CD8-positive, alpha-beta T cell (primary cell): ENCODE measurements at regions of chr5 and their contacts with region 1.

Region 1: DNA sequence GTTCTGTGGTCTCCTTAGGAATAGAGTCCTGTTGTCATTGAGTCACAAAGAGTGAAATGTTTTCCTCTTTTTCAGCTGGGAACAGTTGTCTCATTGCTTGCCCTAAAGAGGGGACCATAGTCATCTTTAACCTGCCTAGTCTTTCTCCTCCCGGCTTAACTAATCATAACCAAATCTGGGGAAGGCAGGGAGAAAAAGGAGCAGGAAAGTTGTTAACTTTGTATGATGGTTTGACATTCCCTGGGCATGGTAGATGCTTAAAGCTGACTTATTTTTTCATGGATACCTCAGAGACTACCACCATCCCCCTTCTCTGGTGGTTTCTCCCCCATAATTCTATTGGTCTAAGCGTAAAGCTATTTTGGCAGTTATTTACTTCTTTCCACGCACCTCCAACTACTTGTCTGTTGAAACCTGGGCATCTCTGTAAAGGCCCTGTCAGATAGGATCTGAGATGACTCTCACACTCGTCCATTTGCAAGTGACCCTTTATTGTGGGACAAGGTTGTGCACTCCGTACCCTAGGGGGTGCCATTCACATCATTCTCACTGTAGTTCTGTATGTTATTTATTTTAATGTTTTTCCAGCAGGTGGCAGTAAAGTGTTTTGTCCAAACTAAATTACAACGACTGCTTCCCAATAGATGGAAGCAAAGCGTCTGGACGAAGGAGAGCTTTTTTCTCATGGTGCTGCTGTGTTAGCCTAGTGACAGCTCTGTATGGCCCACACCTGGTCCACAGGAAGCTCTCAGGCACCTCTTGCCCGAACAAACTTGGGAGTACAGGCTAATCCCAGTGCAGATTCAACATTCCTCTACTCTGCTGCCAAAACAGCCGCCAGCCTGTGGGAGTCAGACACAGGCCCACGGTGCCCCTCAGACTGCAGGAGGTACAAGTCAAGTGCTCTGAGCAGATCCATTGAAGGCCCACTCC is 3.0 kb upstream of the FAM13B start:
- DNase-seq: peak; percentile 21 to 90 (median 61)
- ATAC-seq: peak; percentile 40
- H3K4me3 ChIP-seq: no peak overlapping the region
- H3K4me3 Mint-ChIP-seq: no peak overlapping the region
- H3K27ac ChIP-seq: no peak overlapping the region
- H3K27ac Mint-ChIP-seq: no peak overlapping the region
- H3K4me1 ChIP-seq: peaks cover 23% of the 10 kb centered on the region
- H3K4me1 Mint-ChIP-seq: peaks cover 30% of the 10 kb centered on the region
- H3K27me3 ChIP-seq: no peaks in the 10 kb centered on the region
- H3K27me3 Mint-ChIP-seq: no peaks in the 10 kb centered on the region
- CTCF ChIP-seq: peak; percentile 99

Region 2: DNA sequence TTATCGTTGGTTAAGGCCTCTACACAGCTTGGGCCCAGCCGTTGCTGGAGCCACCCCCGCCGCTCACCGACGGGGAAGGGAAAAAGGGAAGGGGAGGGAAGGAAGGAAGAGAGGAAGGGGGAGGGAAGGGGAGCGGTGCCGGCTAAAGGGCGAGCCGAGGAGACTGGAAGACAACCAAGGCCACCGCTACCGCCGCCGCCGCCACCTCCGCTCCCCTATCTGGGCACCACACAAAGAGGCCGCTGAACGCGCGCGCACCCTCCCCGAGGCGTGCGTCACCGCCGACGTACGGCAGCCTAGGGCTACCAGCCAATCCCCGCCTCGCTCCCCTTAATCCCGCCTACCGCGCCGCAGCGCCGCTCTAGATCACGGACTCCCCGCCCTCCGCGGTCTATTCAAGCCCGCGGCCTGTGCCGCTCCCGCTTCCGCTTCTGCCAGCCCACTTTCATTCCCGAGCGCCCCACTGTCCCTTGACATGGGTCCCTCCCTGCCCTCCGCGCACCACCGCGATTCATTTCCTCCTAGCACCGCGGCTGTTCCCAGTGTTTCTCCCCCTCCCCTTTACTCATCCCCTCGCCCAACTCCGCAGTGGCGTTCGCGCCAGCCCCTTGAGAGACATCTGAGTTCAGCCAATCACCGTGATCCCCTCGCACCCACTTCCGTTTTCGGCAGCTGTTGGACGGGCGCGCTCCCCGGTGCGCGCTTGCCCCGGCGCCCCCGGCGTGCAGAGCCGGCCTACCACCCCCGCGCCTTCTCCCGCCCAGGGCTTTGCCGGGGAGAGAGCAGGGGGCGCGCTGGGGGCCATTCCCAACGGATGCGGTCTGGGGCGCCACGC is 281.5 kb before region 1 on chr5 and contains the start of gene HNRNPA0:
- CTCF ChIA-PET with region 1: no interaction called
- POLR2A ChIA-PET with region 1: no interaction called
- intact Hi-C with region 1: loop called (anchors 1 kb)
- DNase-seq: peak; percentile 90 to 99 (median 98)
- ATAC-seq: peak; percentile 82
- H3K4me3 ChIP-seq: peak within 1 kb of the TSS; percentile 92 to 96
- H3K4me3 Mint-ChIP-seq: peak within 1 kb of the TSS; percentile 99
- H3K27ac ChIP-seq: peak within 1 kb of the TSS; percentile 98 to 100
- H3K27ac Mint-ChIP-seq: peak within 1 kb of the TSS; percentile 100
- H3K4me1 ChIP-seq: peaks cover 26% of the 10 kb centered on the region
- H3K4me1 Mint-ChIP-seq: peaks cover 32% of the 10 kb centered on the region
- H3K27me3 ChIP-seq: no peaks in the 10 kb centered on the region
- H3K27me3 Mint-ChIP-seq: no peaks in the 10 kb centered on the region
- CTCF ChIP-seq: no peak
- total RNA-seq, gene HNRNPA0: 53.7 to 57.0 TPM

Region 3: GRCh38 chr5:138018844-138019243 is 17.0 kb before region 1 on chr5:
- CTCF ChIA-PET with region 1: interaction called, 13 read pairs
- POLR2A ChIA-PET with region 1: no interaction called
- intact Hi-C with region 1: no loop called
- DNase-seq: no peak
- ATAC-seq: no peak
- H3K4me3 ChIP-seq: no peak overlapping the region
- H3K4me3 Mint-ChIP-seq: no peak overlapping the region
- H3K27ac ChIP-seq: no peak overlapping the region
- H3K27ac Mint-ChIP-seq: no peak overlapping the region
- H3K4me1 ChIP-seq: peaks cover 17% of the 10 kb centered on the region
- H3K4me1 Mint-ChIP-seq: peaks cover 57% of the 10 kb centered on the region
- H3K27me3 ChIP-seq: no peaks in the 10 kb centered on the region
- H3K27me3 Mint-ChIP-seq: no peaks in the 10 kb centered on the region
- CTCF ChIP-seq: no peak

Region 4: DNA sequence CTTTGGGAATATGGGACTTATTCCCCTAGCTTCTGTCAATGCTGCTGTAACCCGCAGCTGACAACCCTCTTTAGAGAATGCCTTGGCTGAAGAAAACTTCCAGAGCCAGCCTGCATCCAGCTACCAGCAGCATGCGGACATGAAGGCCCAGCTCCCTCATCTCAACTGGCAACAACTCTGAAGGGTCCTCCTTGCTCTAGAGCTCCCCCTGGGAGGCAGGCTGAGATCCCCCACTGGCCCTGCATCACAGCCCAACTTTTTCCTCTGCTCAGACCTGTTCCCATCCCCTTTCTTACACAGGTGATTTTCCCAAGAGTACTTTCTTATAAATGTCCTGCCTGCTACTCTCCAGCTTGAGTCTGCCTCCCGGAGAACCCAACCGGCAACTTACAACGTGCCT is 29.2 kb after region 1 on chr5:
- CTCF ChIA-PET with region 1: interaction called, 155 read pairs
- POLR2A ChIA-PET with region 1: interaction called, 4 read pairs
- intact Hi-C with region 1: loop called (anchors 1 kb)
- DNase-seq: peak in 3 of 9 experiments; percentile 9 to 14 (median 9)
- ATAC-seq: no peak
- H3K4me3 ChIP-seq: no peak overlapping the region
- H3K4me3 Mint-ChIP-seq: no peak overlapping the region
- H3K27ac ChIP-seq: no peak overlapping the region
- H3K27ac Mint-ChIP-seq: no peak overlapping the region
- H3K4me1 ChIP-seq: no peaks in the 10 kb centered on the region
- H3K4me1 Mint-ChIP-seq: peaks cover 4% of the 10 kb centered on the region
- H3K27me3 ChIP-seq: no peaks in the 10 kb centered on the region
- H3K27me3 Mint-ChIP-seq: no peaks in the 10 kb centered on the region
- CTCF ChIP-seq: no peak

Region 5: DNA sequence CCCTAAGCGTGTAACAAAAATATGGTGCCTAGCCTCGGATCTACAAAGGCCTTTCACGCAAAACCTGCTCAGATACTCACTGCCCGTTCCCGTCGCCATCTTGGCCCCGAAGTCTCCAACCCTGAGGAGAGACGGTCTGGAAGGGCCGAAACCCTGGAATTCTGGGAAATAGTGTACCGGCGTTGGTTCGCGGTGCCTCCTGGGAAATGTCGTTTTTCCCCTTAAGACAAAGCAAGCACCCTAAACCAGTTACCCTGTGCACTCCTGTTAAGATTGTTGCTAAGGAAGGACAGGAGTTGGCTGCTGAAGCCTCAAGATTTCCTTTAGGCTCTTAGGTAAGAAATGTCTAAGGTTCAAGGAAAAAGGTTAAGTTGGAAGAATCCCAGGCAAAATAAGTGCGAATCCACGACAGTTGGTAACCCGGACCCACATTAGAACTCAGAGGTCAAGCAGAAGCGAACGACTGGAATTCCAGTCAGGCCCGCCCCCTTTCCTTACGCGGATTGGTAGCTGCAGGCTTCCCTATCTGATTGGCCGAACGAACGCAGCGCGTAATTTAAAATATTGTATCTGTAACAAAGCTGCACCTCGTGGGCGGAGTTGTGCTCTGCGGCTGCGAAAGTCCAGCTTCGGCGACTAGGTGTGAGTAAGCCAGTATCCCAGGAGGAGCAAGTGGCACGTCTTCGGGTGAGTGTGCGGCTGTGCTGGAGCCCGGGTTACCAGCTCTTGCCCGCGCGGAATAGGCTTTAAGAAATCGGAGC is 142.8 kb after region 1 on chr5 and contains the starts of genes BRD8 and KIF20A:
- CTCF ChIA-PET with region 1: no interaction called
- POLR2A ChIA-PET with region 1: no interaction called
- intact Hi-C with region 1: loop called (anchors 1 to 2 kb)
- DNase-seq: peak; percentile 74 to 94 (median 88)
- ATAC-seq: peak; percentile 88
- H3K4me3 ChIP-seq: peak within 1 kb of the TSS; percentile 67 to 92
- H3K4me3 Mint-ChIP-seq: peak within 1 kb of the TSS; percentile 46
- H3K27ac ChIP-seq: peak within 1 kb of the TSS; percentile 42 to 77
- H3K27ac Mint-ChIP-seq: no peak within 1 kb of the TSS
- H3K4me1 ChIP-seq: peaks cover 15% of the 10 kb centered on the region
- H3K4me1 Mint-ChIP-seq: peaks cover 10% of the 10 kb centered on the region
- H3K27me3 ChIP-seq: no peaks in the 10 kb centered on the region
- H3K27me3 Mint-ChIP-seq: no peaks in the 10 kb centered on the region
- CTCF ChIP-seq: no peak
- total RNA-seq, gene BRD8: 13.0 to 15.0 TPM
- total RNA-seq, gene KIF20A: 0.19 TPM in 1 of 2 experiments, not detected in the other

Region 6: GRCh38 chr5:138352071-138352721 is 316.3 kb after region 1 on chr5 and contains the start of gene KDM3B:
- CTCF ChIA-PET with region 1: no interaction called
- POLR2A ChIA-PET with region 1: no interaction called
- intact Hi-C with region 1: loop called (anchors 5 kb)
- DNase-seq: peak; percentile 86 to 96 (median 92)
- ATAC-seq: peak; percentile 89
- H3K4me3 ChIP-seq: peak within 1 kb of the TSS; percentile 87 to 97
- H3K4me3 Mint-ChIP-seq: peak within 1 kb of the TSS; percentile 97
- H3K27ac ChIP-seq: peak within 1 kb of the TSS; percentile 83 to 89
- H3K27ac Mint-ChIP-seq: peak within 1 kb of the TSS; percentile 97
- H3K4me1 ChIP-seq: peaks cover 34% of the 10 kb centered on the region
- H3K4me1 Mint-ChIP-seq: peaks cover 47% of the 10 kb centered on the region
- H3K27me3 ChIP-seq: no peaks in the 10 kb centered on the region
- H3K27me3 Mint-ChIP-seq: no peaks in the 10 kb centered on the region
- CTCF ChIP-seq: peak; percentile 99
- total RNA-seq, gene KDM3B: 60.2 to 60.3 TPM